ENCODE measurements at regions of chr3 and their contacts with region 1.

Region 1: GRCh38 chr3:187738331-187739093 is 6.8 kb downstream of the BCL6 start:
- DNase-seq: peak; percentile 73 to 96 (median 80)

Region 2: GRCh38 chr3:187558990-187559389 is 179.5 kb before region 1 on chr3:
- intact Hi-C with region 1: no loop called
- DNase-seq: no peak

Region 3: GRCh38 chr3:187616307-187616972 is 122.1 kb before region 1 on chr3:
- intact Hi-C with region 1: no loop called
- DNase-seq: peak in 4 of 10 donors; percentile 10 to 46 (median 30)

Region 4: GRCh38 chr3:189148081-189148507 is 1409.6 kb after region 1 on chr3:
- intact Hi-C with region 1: loop called (anchors 1 kb)
- DNase-seq: peak in 7 of 10 donors; percentile 20 to 90 (median 70)

Region 5: GRCh38 chr3:189233225-189233858 is 1494.8 kb after region 1 on chr3:
- intact Hi-C with region 1: loop called (anchors 5 kb)
- DNase-seq: peak in 9 of 10 donors; percentile 14 to 92 (median 54)